ENCODE measurements at regions of chr10 and their contacts with region 1.

Region 1: DNA sequence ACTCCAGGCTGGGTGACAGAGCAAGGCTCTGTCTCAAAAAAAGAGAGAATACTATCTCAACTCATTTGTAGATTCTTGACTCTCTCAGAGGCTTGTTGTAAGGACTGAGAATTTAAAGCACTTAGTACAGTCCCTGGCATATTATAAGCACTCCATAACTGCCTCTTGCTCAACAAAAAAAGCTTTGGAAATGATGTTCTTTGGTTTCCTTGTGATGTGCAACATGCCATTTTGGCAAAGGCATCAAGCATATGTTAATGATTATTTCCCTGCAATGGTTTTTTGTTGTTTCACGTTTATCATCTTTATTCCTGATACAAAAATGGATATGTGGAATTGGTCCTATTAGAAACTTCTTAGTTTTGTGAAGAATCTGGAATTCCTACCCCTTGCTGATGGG is 15.7 kb downstream of the NOLC1 start:
- DNase-seq: no peak
- H3K4me3 ChIP-seq: no peak overlapping the region
- CTCF ChIP-seq: no peak

Region 2: GRCh38 chr10:102132563-102133372 is 35.1 kb before region 1 on chr10 and contains the start of gene PPRC1:
- in situ Hi-C with region 1: no loop called
- DNase-seq: peak; percentile 99
- H3K4me3 ChIP-seq: peak within 1 kb of the TSS; percentile 96
- CTCF ChIP-seq: peak; percentile 92

Region 3: GRCh38 chr10:102352066-102352715 is 184.3 kb after region 1 on chr10:
- in situ Hi-C with region 1: loop called (anchors 10 kb)
- DNase-seq: no peak
- H3K4me3 ChIP-seq: no peak overlapping the region
- CTCF ChIP-seq: peak; percentile 98